ENCODE measurements at regions of chr10 and their contacts with region 1.

Region 1: DNA sequence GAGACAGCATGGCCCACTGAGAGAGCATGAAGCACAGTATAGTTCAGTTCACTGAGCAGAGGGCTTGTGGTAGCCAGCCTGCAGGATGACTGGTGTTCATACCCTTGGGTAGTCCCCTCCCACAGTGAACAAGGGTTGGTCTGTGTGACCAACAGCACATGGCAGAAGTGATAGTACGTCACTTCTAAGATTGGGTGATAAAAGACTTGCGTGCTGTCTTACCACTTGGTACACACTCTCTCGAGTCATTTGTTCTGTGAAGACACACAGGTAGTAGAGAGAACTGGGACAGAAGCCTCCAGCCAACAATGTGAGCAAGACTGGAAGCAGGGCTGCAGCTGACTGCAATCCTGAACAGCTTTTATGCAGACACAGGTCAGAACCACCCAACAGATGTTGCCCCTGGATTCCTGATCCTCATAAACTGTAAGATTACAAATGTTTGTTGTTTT is 14.6 kb downstream of the EPC1 start:
- DNase-seq: peak; percentile 80
- H3K4me3 Mint-ChIP-seq: peak overlapping the region; percentile 85
- H3K27ac Mint-ChIP-seq: peak overlapping the region; percentile 95
- H3K4me1 Mint-ChIP-seq: peaks cover 76% of the 10 kb centered on the region
- H3K27me3 Mint-ChIP-seq: no peaks in the 10 kb centered on the region

Region 2: DNA sequence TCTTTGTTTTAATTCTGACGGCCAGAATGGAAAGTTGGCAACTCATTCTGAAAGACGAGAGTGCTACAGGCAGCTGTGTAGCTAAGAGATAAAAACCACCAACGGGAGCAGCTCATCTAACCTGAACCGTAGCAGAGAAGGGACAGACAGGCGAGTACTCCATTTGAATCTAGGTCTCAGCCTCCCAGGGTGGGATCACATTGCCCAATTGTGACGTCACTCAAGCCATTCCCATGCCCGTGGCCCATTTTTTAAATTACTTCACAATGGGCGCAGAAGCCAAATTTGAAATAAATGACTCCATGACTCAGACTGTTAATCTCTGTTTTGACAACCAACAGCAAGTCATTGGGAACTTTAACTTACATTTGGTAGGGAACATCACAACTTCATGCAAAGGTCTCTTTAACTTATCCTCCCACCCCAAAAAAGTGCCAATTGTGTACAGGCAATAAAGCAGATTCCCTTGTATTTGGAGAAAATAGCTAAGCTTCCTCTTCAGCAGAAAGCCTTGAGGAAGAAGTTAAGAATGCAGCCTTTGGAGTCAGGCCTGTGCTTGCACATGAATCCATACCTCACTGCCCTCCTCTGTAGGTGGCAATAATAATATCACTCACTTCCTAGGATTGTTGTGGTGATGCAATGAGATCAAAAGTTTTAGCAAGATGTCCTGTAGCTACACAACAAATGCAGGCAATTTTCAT is 182.9 kb before region 1 on chr10:
- intact Hi-C with region 1: loop called (anchors 1 kb)
- DNase-seq: peak; percentile 53
- H3K4me3 Mint-ChIP-seq: peak overlapping the region; percentile 10
- H3K27ac Mint-ChIP-seq: peak overlapping the region; percentile 94
- H3K4me1 Mint-ChIP-seq: peaks cover 48% of the 10 kb centered on the region
- H3K27me3 Mint-ChIP-seq: no peaks in the 10 kb centered on the region

Region 3: DNA sequence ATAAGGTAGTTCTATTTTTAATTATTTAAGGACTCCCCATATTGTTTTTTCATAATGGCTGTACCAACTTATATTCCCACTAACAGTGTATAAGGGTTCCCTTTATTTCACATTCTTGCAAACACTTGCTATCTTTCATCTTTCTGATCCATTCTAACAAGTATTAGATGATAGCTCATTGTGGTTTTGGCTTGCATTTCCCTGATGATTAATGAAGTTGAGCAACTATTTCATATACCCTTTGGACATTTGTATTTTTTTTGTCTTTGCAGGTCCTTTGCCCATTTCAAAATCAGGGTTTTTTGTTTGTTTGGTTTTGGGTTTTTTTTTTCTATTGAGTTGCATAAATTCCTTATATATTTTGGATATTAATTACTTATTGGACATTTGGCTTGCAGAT is 92.6 kb before region 1 on chr10:
- intact Hi-C with region 1: loop called (anchors 1 kb)
- DNase-seq: no peak
- H3K4me3 Mint-ChIP-seq: no peak overlapping the region
- H3K27ac Mint-ChIP-seq: no peak overlapping the region
- H3K4me1 Mint-ChIP-seq: peaks cover 12% of the 10 kb centered on the region
- H3K27me3 Mint-ChIP-seq: no peaks in the 10 kb centered on the region

Region 4: DNA sequence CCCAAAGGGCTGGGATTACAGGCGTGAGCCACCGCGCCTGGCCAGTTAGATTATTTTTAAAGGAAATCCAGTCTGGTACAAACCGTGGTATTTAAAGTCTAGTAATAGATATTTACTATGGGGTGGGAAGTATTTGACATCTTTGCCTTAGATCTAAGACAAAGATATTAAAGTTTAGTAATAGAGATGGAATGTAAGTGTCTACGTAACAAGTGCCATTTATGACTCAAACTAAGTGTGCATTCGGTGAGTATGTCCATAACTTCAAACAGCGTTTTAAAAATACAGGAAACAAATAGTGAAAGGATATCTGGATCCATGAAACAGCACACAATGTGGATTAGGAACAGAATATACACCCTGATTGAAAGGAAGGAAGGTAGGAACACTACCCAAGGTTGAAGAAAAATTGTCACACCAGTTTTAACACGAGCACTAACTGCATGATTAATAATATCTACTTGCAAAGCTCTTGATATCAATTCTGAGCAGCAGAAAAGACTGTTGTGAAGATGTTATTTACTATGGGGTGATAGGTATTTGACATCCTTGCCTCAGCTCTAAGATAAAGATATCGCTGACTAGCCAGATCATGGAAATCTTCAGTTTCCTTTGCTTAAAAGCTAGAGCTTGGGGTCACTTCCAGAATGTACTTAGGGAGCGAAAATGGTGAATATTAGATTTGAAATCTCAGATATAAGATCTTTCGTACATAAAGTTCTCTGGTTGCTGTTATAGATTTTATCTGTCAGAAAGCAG is 34.1 kb before region 1 on chr10:
- intact Hi-C with region 1: loop called (anchors 2 kb)
- DNase-seq: no peak
- H3K4me3 Mint-ChIP-seq: peak overlapping the region; percentile 0
- H3K27ac Mint-ChIP-seq: peak overlapping the region; percentile 27
- H3K4me1 Mint-ChIP-seq: peaks cover 27% of the 10 kb centered on the region
- H3K27me3 Mint-ChIP-seq: no peaks in the 10 kb centered on the region

Region 5: DNA sequence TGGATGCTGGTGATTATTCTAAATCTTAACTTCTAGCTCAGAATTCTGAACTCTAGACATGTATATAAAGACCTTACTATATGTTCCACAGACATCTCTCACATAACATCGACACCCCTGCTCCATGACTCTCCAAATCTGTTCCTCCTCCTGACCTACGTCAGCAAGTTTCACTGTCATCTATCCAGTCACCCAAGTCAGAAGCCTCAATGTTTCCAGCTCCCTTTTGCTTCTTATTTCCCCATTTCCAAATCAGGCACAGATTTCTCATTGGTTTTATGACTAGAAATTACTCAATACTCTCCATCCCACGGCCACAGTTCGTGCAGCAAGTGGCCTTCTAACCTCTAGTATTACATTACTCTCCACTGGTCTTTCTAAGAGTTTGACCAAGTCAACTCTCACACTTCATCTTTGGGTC is 13.8 kb before region 1 on chr10:
- intact Hi-C with region 1: loop called (anchors 1 kb)
- DNase-seq: no peak
- H3K4me3 Mint-ChIP-seq: peak overlapping the region; percentile 13
- H3K27ac Mint-ChIP-seq: peak overlapping the region; percentile 85
- H3K4me1 Mint-ChIP-seq: peaks cover 54% of the 10 kb centered on the region
- H3K27me3 Mint-ChIP-seq: no peaks in the 10 kb centered on the region

Region 6: GRCh38 chr10:32367793-32368453 is 35.6 kb after region 1 on chr10:
- intact Hi-C with region 1: no loop called
- DNase-seq: peak; percentile 58
- H3K4me3 Mint-ChIP-seq: no peak overlapping the region
- H3K27ac Mint-ChIP-seq: no peak overlapping the region
- H3K4me1 Mint-ChIP-seq: peaks cover 22% of the 10 kb centered on the region
- H3K27me3 Mint-ChIP-seq: no peaks in the 10 kb centered on the region

Region 7: DNA sequence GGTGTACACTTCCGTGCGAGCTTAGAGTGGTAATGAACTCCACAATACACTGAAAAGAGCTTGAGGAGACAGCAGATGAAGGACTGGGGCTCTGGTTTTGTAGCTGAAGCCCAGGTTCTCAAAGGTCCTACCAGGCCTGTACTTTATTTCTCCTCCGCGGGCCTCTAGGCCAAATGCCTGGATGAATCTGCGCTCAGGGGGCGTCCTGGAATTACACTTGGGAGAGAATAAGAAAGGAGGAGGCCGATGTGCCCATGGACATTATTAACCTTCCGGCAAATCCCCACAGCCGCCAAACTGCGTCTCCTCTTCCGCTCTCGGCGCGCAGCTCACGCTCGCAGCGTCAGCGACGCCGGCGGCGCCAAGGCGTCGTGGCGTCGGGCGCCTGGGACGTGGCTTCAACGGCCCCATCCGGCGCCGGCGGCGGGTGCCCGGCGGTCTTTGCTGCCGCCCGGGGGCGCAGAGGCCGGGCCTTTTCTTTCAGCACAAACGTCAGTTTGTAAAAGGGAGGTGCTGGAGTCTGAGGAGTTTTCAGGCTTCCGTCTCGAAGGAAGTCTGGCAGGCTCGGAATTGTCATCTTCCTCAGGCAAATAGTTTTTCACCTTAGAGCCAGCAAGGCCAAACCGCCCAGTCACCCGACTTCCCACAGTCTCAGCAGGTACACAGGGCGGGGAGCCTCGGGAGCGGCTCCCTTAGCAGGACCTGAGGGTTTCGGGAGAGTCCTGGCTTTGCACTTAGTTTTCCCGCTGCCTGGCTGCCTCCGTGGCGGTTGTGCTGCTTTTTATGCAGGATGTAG is 113.6 kb after region 1 on chr10 and contains the start of gene CCDC7:
- intact Hi-C with region 1: loop called (anchors 1 kb)
- DNase-seq: peak; percentile 82
- H3K4me3 Mint-ChIP-seq: peak within 1 kb of the TSS; percentile 90
- H3K27ac Mint-ChIP-seq: peak within 1 kb of the TSS; percentile 94
- H3K4me1 Mint-ChIP-seq: peaks cover 10% of the 10 kb centered on the region
- H3K27me3 Mint-ChIP-seq: peaks cover 2% of the 10 kb centered on the region
- total RNA-seq, gene CCDC7: 12.2 and 14.0 TPM in 2 replicates

Region 8: DNA sequence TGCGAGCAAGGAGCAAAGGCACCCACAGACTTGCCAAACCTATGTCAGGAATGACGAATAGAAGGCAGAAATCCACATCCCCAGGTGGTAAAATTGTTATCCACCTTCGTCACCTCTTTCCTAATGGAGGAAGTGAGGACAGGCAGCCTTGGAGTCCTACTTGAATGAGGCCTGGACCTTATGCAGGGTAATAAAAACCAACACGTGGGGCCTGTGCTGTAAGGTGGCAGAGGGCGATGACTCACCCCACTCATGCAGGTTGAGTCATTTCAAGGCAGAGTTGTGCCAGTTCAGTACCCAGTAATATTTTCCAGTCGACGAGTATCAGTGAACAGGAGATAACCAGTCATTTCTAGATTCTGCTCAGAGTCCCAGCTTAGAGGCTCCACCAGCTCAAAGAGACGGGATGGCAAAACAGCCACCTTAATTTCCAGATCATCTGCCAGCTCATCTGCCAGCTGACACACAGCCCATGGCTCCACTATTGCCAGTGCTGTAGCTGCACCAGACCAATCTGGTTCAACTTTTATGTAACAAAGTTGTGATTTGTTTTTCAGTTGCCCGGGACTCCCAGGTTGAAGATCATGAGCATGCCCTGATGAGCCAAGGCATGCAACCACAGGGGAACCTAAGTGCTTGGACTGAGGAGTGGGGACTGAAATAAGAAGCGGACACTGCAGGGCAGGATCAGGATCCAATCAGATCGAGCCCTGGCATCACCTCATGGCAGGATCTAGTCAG is 801.9 kb after region 1 on chr10:
- intact Hi-C with region 1: loop called (anchors 10 kb)
- DNase-seq: peak; percentile 64
- H3K4me3 Mint-ChIP-seq: peak overlapping the region; percentile 18
- H3K27ac Mint-ChIP-seq: peak overlapping the region; percentile 84
- H3K4me1 Mint-ChIP-seq: peaks cover 65% of the 10 kb centered on the region
- H3K27me3 Mint-ChIP-seq: no peaks in the 10 kb centered on the region